Activated naive CD4-positive, alpha-beta T cell treated with anti-CD3 and anti-CD28 coated beads for 36 hours (primary cell): ENCODE measurements at regions of chr3 and their contacts with region 1.

Region 1: GRCh38 chr3:129052675-129053074 is 7.9 kb upstream of the GP9 start:
- DNase-seq: no peak
- H3K4me3 Mint-ChIP-seq: no peak overlapping the region
- H3K27ac Mint-ChIP-seq: no peak overlapping the region
- H3K4me1 Mint-ChIP-seq: peaks cover 10% of the 10 kb centered on the region
- H3K27me3 Mint-ChIP-seq: no peaks in the 10 kb centered on the region

Region 2: GRCh38 chr3:128969993-128970739 is 82.5 kb before region 1 on chr3:
- CTCF ChIA-PET with region 1: interaction called, 40 read pairs
- intact Hi-C with region 1: loop called (anchors 1 kb)
- DNase-seq: peak; percentile 78
- H3K4me3 Mint-ChIP-seq: no peak overlapping the region
- H3K27ac Mint-ChIP-seq: no peak overlapping the region
- H3K4me1 Mint-ChIP-seq: no peaks in the 10 kb centered on the region
- H3K27me3 Mint-ChIP-seq: no peaks in the 10 kb centered on the region

Region 3: DNA sequence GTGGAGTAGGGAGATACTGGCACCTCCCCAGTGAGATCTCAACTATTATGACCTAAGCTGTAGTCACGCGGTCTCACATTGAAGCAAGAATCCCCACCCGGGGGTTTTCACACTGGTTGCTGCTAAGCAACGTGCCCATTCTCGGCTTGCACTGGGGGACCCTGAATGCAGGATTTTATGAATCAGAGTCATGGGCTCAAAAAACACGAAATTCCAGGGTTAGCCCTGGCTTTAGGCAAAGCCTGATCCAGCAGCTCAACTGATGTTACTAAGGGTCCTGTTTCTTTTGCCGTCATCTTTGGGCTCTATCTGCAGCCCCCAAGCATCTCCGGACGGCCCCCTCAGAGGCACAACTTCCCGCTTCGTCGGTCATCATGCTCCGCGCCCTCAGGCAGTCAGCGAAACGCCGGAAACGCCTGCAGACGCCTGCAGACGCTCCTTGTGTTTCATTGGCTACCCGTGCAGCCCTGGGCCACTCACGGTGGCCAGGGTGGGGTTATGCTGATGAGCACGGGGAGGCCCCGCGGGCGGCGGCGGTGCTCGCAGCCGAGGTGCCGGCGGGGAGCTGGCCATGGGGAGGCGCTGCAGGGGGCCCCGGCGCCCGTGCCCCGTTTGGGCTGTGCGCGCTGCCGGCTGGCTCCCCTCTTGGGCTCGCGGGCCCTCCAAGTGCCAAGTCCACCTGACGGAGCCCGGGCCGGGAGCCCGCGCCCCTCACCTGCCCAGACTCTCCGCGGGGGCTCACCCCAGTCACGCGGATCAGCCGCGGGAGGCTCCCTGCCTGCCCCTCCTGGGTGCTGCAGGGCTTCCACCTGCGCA is 25.7 kb before region 1 on chr3:
- CTCF ChIA-PET with region 1: interaction called, 22 read pairs
- intact Hi-C with region 1: no loop called
- DNase-seq: peak; percentile 96
- H3K4me3 Mint-ChIP-seq: peak overlapping the region; percentile 77
- H3K27ac Mint-ChIP-seq: peak overlapping the region; percentile 82
- H3K4me1 Mint-ChIP-seq: peaks cover 7% of the 10 kb centered on the region
- H3K27me3 Mint-ChIP-seq: no peaks in the 10 kb centered on the region

Region 4: GRCh38 chr3:129085165-129085715 is 32.6 kb after region 1 on chr3:
- CTCF ChIA-PET with region 1: interaction called, 12 read pairs
- intact Hi-C with region 1: no loop called
- DNase-seq: no peak
- H3K4me3 Mint-ChIP-seq: peak overlapping the region; percentile 18
- H3K27ac Mint-ChIP-seq: peak overlapping the region; percentile 53
- H3K4me1 Mint-ChIP-seq: peaks cover 8% of the 10 kb centered on the region
- H3K27me3 Mint-ChIP-seq: no peaks in the 10 kb centered on the region

Region 5: GRCh38 chr3:129160891-129161859 is 108.5 kb after region 1 on chr3 and contains the start of gene ISY1:
- CTCF ChIA-PET with region 1: interaction called, 60 read pairs
- intact Hi-C with region 1: loop called (anchors 1 kb)
- DNase-seq: peak; percentile 91
- H3K4me3 Mint-ChIP-seq: peak within 1 kb of the TSS; percentile 87
- H3K27ac Mint-ChIP-seq: peak within 1 kb of the TSS; percentile 99
- H3K4me1 Mint-ChIP-seq: peaks cover 31% of the 10 kb centered on the region
- H3K27me3 Mint-ChIP-seq: no peaks in the 10 kb centered on the region
- total RNA-seq, gene ISY1: 56.8 to 65.4 TPM

Region 6: DNA sequence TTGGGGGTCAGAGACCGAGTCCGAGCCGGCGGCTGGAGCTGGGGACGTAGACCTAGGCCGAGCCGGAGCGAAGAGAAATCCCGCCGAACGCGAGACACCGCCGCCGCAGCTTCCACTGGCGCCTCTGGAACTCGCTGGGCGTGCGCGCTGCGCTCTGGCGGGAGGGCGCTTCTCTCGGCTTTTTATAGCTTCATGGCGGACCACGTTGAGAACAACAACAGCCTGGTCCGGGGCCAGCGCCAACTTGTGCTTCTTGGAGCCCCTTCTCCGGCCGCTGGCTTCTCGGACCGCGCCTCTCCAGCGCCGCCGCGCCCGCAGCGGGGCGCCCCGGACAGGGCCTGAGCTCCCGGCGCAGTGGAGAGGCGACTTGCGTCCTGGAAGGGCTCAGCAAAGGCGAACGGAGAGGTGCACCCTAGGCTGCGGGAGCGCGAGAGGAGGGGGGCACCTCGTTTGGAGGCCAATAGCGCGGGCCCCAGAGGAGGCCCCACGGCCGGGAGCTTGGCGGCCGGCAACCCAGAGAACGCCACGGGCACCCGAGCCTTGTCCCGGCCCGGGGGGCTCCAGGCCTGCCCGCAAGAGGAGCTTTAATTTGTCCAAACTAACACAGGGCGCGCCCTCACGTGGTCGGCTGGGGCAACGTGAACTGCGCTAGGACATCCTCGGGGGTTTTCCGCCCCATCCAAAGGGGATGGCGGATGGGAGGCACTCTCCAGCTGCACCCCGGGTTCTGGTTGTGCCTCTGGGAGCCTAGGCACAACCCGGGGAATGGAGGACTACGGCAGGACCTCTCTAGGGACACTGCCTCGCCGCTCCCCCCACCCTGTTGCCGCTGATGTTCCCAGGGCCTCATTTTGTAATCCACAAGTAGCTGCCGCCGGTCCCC is 263.7 kb after region 1 on chr3:
- CTCF ChIA-PET with region 1: interaction called, 4 read pairs
- intact Hi-C with region 1: loop called (anchors 1 kb)
- DNase-seq: peak; percentile 87
- H3K4me3 Mint-ChIP-seq: peak overlapping the region; percentile 96
- H3K27ac Mint-ChIP-seq: peak overlapping the region; percentile 85
- H3K4me1 Mint-ChIP-seq: peaks cover 14% of the 10 kb centered on the region
- H3K27me3 Mint-ChIP-seq: no peaks in the 10 kb centered on the region

Region 7: GRCh38 chr3:129358772-129359371 is 306.2 kb after region 1 on chr3:
- CTCF ChIA-PET with region 1: no interaction called
- intact Hi-C with region 1: no loop called
- DNase-seq: no peak
- H3K4me3 Mint-ChIP-seq: no peak overlapping the region
- H3K27ac Mint-ChIP-seq: no peak overlapping the region
- H3K4me1 Mint-ChIP-seq: no peaks in the 10 kb centered on the region
- H3K27me3 Mint-ChIP-seq: no peaks in the 10 kb centered on the region

Region 8: DNA sequence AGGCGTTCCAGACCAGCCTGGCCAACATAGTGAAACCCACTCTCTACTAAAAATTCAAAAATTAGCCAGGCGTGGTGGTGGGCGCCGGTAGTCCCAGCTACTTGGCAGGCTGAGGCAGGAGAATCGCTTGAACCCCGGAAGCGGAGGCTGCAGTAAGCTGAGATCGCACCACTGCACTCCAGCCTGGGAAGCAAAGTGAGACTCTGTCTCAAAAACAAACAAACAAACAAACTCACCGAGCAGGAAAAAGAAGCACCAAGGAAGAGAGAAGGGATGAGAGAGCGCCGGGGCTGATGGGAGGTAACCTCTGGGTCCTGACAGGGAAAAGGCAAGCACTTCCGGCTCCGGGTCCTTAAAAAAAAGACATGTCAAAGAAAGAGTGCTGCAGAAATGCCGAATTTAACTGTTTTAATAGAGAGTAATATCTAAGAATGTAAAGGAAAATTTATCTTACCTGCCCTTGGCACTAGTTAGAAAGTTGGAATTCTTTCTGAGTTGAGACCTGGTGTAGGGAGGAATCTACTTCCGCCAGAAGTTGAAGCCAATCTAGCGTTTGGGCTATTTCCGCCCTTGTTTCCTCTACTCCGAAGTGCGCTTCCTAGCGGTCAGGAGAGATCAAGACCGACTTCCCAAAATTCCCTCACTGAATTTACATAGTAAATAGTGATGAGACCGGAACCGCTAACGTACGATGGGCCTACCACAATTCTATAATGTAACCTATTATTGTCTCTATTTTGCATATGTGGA is 346.6 kb after region 1 on chr3:
- CTCF ChIA-PET with region 1: no interaction called
- intact Hi-C with region 1: no loop called
- DNase-seq: peak; percentile 87
- H3K4me3 Mint-ChIP-seq: peak overlapping the region; percentile 100
- H3K27ac Mint-ChIP-seq: peak overlapping the region; percentile 99
- H3K4me1 Mint-ChIP-seq: peaks cover 31% of the 10 kb centered on the region
- H3K27me3 Mint-ChIP-seq: no peaks in the 10 kb centered on the region

Region 9: DNA sequence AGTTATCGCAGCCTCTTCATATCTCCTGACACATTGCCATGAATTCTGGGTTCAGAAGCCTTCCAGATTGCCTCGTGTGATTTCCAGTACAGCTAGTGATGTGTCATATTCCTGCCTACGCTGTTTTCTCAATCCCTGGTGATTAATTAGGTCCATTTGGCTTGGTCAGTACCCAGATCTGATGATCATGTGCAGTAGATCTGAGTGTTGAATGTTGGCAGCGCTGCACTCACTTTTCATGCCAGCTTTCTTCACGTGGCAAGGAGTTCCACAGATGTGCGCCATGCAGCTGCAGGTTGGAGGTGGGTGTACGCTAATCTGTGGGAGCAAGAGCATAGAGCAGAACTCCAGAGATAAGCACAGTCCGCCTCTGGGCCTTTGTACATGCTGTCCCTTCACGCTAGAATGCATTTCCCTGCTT is 1205.9 kb after region 1 on chr3:
- CTCF ChIA-PET with region 1: no interaction called
- intact Hi-C with region 1: no loop called
- DNase-seq: no peak
- H3K4me3 Mint-ChIP-seq: no peak overlapping the region
- H3K27ac Mint-ChIP-seq: no peak overlapping the region
- H3K4me1 Mint-ChIP-seq: no peaks in the 10 kb centered on the region
- H3K27me3 Mint-ChIP-seq: peaks cover 8% of the 10 kb centered on the region